ENCODE measurements at regions of chr1 and their contacts with region 1.

Region 1: GRCh38 chr1:110780600-110781484 is 92.1 kb upstream of the CD53 start:
- DNase-seq: peak; percentile 65
- ATAC-seq: peak; percentile 65
- H3K4me3 ChIP-seq: no peak overlapping the region
- H3K27ac ChIP-seq: no peak overlapping the region
- H3K4me1 ChIP-seq: no peaks in the 10 kb centered on the region
- H3K27me3 ChIP-seq: peaks cover 7% of the 10 kb centered on the region; the same call in 1 of the 2 replicates
- CTCF ChIP-seq: peak; percentile 66
- POLR2A ChIP-seq: no peak
- RAD21 ChIP-seq: peak; percentile 52

Region 2: GRCh38 chr1:110524311-110525251 is 256.3 kb before region 1 on chr1:
- CTCF ChIA-PET with region 1: no interaction called
- POLR2A ChIA-PET with region 1: no interaction called
- dilution Hi-C with region 1: no loop called
- in situ Hi-C with region 1: loop called (anchors 10 kb)
- intact Hi-C with region 1: loop called (anchors 2 kb)
- DNase-seq: peak; percentile 30
- ATAC-seq: peak; percentile 65
- H3K4me3 ChIP-seq: no peak overlapping the region
- H3K27ac ChIP-seq: no peak overlapping the region
- H3K4me1 ChIP-seq: no peaks in the 10 kb centered on the region
- H3K27me3 ChIP-seq: peaks cover 42% of the 10 kb centered on the region
- CTCF ChIP-seq: peak; percentile 56
- POLR2A ChIP-seq: no peak
- RAD21 ChIP-seq: peak; percentile 62

Region 3: GRCh38 chr1:110630839-110631663 is 149.8 kb before region 1 on chr1:
- CTCF ChIA-PET with region 1: no interaction called
- POLR2A ChIA-PET with region 1: no interaction called
- dilution Hi-C with region 1: no loop called
- in situ Hi-C with region 1: no loop called
- intact Hi-C with region 1: loop called (anchors 1 kb)
- DNase-seq: peak; percentile 46
- ATAC-seq: peak; percentile 96
- H3K4me3 ChIP-seq: no peak overlapping the region
- H3K27ac ChIP-seq: no peak overlapping the region
- H3K4me1 ChIP-seq: peaks cover 3% of the 10 kb centered on the region; the same call in 1 of the 2 replicates
- H3K27me3 ChIP-seq: peaks cover 10% of the 10 kb centered on the region
- CTCF ChIP-seq: peak; percentile 72
- POLR2A ChIP-seq: no peak
- RAD21 ChIP-seq: peak; percentile 65

Region 4: DNA sequence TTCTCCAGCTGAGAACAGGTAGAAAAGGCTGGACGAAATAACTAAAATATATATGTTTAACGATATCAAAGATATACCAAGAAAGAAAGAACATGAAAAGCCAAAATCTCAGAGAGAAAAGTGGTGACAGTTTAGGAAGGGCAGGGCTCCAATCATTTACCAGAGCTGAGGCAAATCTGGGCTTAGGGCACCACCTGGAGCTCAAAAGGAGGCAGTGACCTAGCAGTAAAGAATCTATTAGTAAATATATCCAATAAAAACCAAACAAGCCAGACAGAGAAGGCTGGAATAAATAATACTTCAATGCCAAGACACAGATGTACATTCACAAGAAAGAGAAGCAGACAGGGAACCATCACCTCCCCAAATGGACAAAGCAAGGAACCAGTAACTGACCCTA is 553.3 kb after region 1 on chr1:
- CTCF ChIA-PET with region 1: no interaction called
- POLR2A ChIA-PET with region 1: no interaction called
- dilution Hi-C with region 1: no loop called
- in situ Hi-C with region 1: no loop called
- intact Hi-C with region 1: loop called (anchors 1 kb)
- DNase-seq: peak; percentile 49
- ATAC-seq: peak; percentile 75
- H3K4me3 ChIP-seq: no peak overlapping the region
- H3K27ac ChIP-seq: no peak overlapping the region
- H3K4me1 ChIP-seq: no peaks in the 10 kb centered on the region
- H3K27me3 ChIP-seq: peaks cover 4% of the 10 kb centered on the region; the same call in 1 of the 2 replicates
- CTCF ChIP-seq: peak; percentile 83
- POLR2A ChIP-seq: no peak
- RAD21 ChIP-seq: peak; percentile 80